Endothelial cell of umbilical vein (primary cell): ENCODE measurements at regions of chr1 and their contacts with region 1.

Region 1: DNA sequence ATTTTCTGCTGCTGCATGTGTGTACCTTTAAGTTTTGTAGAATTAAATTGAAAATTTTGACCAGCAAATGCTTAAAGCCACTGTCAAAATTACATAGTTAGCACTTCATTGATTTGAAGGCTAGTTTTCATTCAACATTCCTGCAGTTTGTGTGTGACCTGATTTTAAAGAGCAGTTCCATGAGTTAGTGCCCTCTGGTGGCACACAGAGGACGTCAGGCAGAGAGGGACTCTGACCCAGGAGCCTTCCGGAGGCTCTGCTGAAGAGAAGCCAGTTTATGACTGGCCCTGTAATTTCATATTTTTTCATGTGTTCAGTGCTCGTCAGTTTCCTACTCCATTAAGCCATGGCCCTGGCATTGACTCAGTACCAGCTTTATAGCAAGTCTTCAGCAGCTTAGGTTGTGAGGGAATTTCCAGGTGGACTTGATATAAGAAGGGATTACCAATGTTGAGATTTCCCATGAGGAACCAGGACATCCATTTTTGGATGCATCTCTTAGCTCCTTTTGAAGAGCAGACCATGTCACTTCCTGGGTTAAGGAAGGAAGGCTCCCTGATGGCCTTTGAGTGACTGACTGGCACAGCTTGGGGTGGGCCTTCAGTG is 104.7 kb downstream of the CAMTA1 start:
- DNase-seq: peak; percentile 82
- H3K4me3 ChIP-seq: no peak overlapping the region
- H3K27ac ChIP-seq: no peak overlapping the region
- H3K4me1 ChIP-seq: no peaks in the 10 kb centered on the region
- H3K27me3 ChIP-seq: no peaks in the 10 kb centered on the region
- CTCF ChIP-seq: peak; percentile 76 to 88
- POLR2A ChIP-seq: no peak

Region 2: DNA sequence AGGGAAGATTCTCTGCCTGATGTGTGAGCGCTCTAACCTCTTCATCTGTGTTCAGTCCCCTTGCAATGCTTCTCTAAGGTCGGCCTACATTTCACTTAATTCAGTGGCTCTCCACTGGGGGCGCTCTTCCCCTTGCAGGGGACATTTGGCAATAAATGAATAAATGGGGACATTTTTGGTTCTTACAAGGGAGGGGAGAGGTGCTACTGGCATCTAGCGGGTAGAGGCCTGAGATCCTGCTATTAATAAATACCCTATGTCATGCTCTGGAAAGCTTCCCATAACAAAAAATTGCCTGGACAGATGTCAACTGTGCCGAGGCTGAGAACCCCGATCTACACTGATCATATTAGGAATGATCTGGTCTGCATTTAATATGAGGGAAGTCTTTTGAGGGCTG is 162.4 kb before region 1 on chr1:
- CTCF ChIA-PET with region 1: interaction called, 3 read pairs
- POLR2A ChIA-PET with region 1: no interaction called
- dilution Hi-C with region 1: no loop called
- intact Hi-C with region 1: loop called (anchors 1 kb)
- DNase-seq: peak; percentile 71
- H3K4me3 ChIP-seq: no peak overlapping the region
- H3K27ac ChIP-seq: no peak overlapping the region
- H3K4me1 ChIP-seq: no peaks in the 10 kb centered on the region
- H3K27me3 ChIP-seq: peaks cover 2% of the 10 kb centered on the region in 2 experiments
- CTCF ChIP-seq: peak; percentile 81 to 94
- POLR2A ChIP-seq: no peak

Region 3: GRCh38 chr1:6801966-6802365 is 88.0 kb before region 1 on chr1:
- CTCF ChIA-PET with region 1: interaction called, 71 read pairs
- POLR2A ChIA-PET with region 1: no interaction called
- dilution Hi-C with region 1: no loop called
- intact Hi-C with region 1: no loop called
- DNase-seq: peak; percentile 63
- H3K4me3 ChIP-seq: no peak overlapping the region
- H3K27ac ChIP-seq: no peak overlapping the region
- H3K4me1 ChIP-seq: peaks cover 31% of the 10 kb centered on the region
- H3K27me3 ChIP-seq: no peaks in the 10 kb centered on the region
- CTCF ChIP-seq: no peak
- POLR2A ChIP-seq: no peak

Region 4: GRCh38 chr1:6859415-6860343 is 30.3 kb before region 1 on chr1:
- CTCF ChIA-PET with region 1: no interaction called
- POLR2A ChIA-PET with region 1: no interaction called
- dilution Hi-C with region 1: no loop called
- intact Hi-C with region 1: loop called (anchors 1 kb)
- DNase-seq: peak; percentile 95
- H3K4me3 ChIP-seq: peak overlapping the region in 1 of 3 experiments; percentile 5
- H3K27ac ChIP-seq: peak overlapping the region; percentile 89
- H3K4me1 ChIP-seq: peaks cover 20% of the 10 kb centered on the region
- H3K27me3 ChIP-seq: no peaks in the 10 kb centered on the region
- CTCF ChIP-seq: no peak
- POLR2A ChIP-seq: no peak

Region 5: GRCh38 chr1:6935361-6935883 is 45.4 kb after region 1 on chr1:
- CTCF ChIA-PET with region 1: no interaction called
- POLR2A ChIA-PET with region 1: no interaction called
- dilution Hi-C with region 1: no loop called
- intact Hi-C with region 1: loop called (anchors 1 kb)
- DNase-seq: peak; percentile 99
- H3K4me3 ChIP-seq: peak overlapping the region in 1 of 3 experiments; percentile 50
- H3K27ac ChIP-seq: peak overlapping the region; percentile 83
- H3K4me1 ChIP-seq: peaks cover 9% of the 10 kb centered on the region
- H3K27me3 ChIP-seq: peaks cover 3 to 13% of the 10 kb centered on the region in 2 experiments
- CTCF ChIP-seq: no peak
- POLR2A ChIP-seq: peak; percentile 34

Region 6: DNA sequence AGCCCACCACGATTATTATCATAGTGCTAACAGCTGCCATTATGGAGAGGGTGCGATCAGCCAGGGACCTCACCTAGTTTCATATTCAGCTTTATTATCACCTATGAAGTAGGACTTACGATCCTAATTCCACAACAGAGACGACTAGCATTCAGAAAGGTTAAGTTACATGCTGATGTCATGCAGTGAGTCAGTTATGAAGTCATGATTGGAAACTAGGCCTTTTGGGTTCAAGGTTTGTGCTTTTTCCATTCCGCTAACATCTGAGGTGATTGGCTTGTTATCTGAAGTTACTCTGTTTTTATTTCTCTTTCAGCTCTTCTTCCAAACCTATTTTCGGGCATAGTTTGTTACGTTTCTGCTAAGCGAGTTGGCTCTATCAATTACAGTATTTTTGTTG is 146.4 kb after region 1 on chr1:
- CTCF ChIA-PET with region 1: no interaction called
- POLR2A ChIA-PET with region 1: no interaction called
- dilution Hi-C with region 1: no loop called
- intact Hi-C with region 1: no loop called
- DNase-seq: no peak
- H3K4me3 ChIP-seq: no peak overlapping the region
- H3K27ac ChIP-seq: no peak overlapping the region
- H3K4me1 ChIP-seq: no peaks in the 10 kb centered on the region
- H3K27me3 ChIP-seq: no peaks in the 10 kb centered on the region
- CTCF ChIP-seq: no peak
- POLR2A ChIP-seq: no peak

Region 7: DNA sequence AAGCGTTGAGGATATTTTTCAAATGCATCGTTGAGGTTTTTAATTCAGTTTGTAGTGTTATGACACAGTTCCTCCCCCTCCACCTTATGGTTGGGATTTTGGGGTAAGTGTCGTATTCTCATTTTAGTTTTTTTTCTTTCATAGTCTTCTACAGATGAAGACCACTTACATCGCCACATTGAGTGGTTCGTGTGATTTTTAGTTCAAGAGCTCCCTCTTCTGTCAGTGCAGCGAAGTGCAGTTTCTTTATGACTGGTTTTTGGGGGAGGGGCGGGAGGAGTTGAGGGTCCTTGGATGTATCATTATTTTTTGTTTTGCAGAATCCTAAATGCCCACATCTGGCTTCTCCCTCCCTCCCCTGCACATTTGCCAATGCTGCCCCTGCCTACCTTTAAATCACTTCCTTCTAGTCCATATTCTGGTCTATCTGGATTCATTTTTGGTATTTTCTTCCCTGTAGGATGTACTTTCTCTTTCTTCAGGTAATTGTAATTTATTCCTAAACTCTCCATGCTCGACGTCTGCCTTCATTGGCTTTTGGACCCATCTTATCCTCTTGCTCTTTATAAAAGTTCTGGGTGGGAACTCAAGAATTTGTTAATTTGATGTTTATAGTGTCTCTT is 328.3 kb after region 1 on chr1:
- CTCF ChIA-PET with region 1: no interaction called
- POLR2A ChIA-PET with region 1: no interaction called
- dilution Hi-C with region 1: no loop called
- intact Hi-C with region 1: loop called (anchors 5 kb)
- DNase-seq: peak; percentile 62
- H3K4me3 ChIP-seq: no peak overlapping the region
- H3K27ac ChIP-seq: no peak overlapping the region
- H3K4me1 ChIP-seq: no peaks in the 10 kb centered on the region
- H3K27me3 ChIP-seq: no peaks in the 10 kb centered on the region
- CTCF ChIP-seq: peak; percentile 66 to 74
- POLR2A ChIP-seq: no peak